CD8-positive, alpha-beta T cell (primary cell): ENCODE measurements at regions of chr12 and their contacts with region 1.

Region 1: GRCh38 chr12:75130825-75131224 is 78.8 kb downstream of the KCNC2 start:
- DNase-seq: no peak
- ATAC-seq: no peak
- H3K4me3 ChIP-seq: no peak overlapping the region
- H3K4me3 Mint-ChIP-seq: no peak overlapping the region
- H3K27ac ChIP-seq: no peak overlapping the region
- H3K27ac Mint-ChIP-seq: no peak overlapping the region
- H3K4me1 ChIP-seq: no peaks in the 10 kb centered on the region
- H3K4me1 Mint-ChIP-seq: no peaks in the 10 kb centered on the region
- H3K27me3 ChIP-seq: no peaks in the 10 kb centered on the region
- H3K27me3 Mint-ChIP-seq: no peaks in the 10 kb centered on the region
- CTCF ChIP-seq: no peak

Region 2: DNA sequence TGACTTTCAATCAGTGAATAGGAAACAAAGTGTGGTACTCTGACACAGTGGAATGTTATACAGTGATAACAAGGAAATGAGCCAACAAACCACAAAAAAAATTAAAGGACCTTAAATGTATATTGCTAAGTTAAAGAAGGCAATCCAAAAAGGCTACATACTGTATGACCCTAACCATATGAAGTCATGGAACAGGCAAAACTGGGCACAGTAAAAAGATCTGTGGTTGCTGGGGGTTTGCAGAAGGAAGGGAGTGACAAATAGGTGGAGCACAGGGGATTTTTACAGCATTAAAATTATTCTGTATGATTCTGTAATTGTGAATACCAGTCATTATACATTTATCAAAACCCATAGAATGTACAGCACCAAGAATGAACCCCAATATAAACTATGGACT is 33.8 kb before region 1 on chr12:
- CTCF ChIA-PET with region 1: no interaction called
- POLR2A ChIA-PET with region 1: no interaction called
- intact Hi-C with region 1: loop called in 1 of 2 experiments (anchors 2 kb)
- DNase-seq: no peak
- ATAC-seq: no peak
- H3K4me3 ChIP-seq: no peak overlapping the region
- H3K4me3 Mint-ChIP-seq: no peak overlapping the region
- H3K27ac ChIP-seq: no peak overlapping the region
- H3K27ac Mint-ChIP-seq: no peak overlapping the region
- H3K4me1 ChIP-seq: no peaks in the 10 kb centered on the region
- H3K4me1 Mint-ChIP-seq: no peaks in the 10 kb centered on the region
- H3K27me3 ChIP-seq: no peaks in the 10 kb centered on the region
- H3K27me3 Mint-ChIP-seq: peaks cover 4% of the 10 kb centered on the region
- CTCF ChIP-seq: no peak